ENCODE measurements at regions of chr2 and their contacts with region 1.

Region 1: GRCh38 chr2:84925724-84926376 is 20.4 kb downstream of the TMSB10 start:
- DNase-seq: peak; percentile 99
- H3K4me3 Mint-ChIP-seq: peak overlapping the region; percentile 82
- H3K27ac Mint-ChIP-seq: peak overlapping the region; percentile 78
- H3K4me1 Mint-ChIP-seq: peaks cover 43% of the 10 kb centered on the region
- H3K27me3 Mint-ChIP-seq: no peaks in the 10 kb centered on the region

Region 2: GRCh38 chr2:84781942-84782716 is 143.7 kb before region 1 on chr2:
- CTCF ChIA-PET with region 1: interaction called, 18 read pairs
- POLR2A ChIA-PET with region 1: interaction called, 14 read pairs
- DNase-seq: peak; percentile 75
- H3K4me3 Mint-ChIP-seq: no peak overlapping the region
- H3K27ac Mint-ChIP-seq: peak overlapping the region; percentile 97
- H3K4me1 Mint-ChIP-seq: peaks cover 67% of the 10 kb centered on the region
- H3K27me3 Mint-ChIP-seq: no peaks in the 10 kb centered on the region

Region 3: GRCh38 chr2:84839851-84840250 is 86.0 kb before region 1 on chr2:
- CTCF ChIA-PET with region 1: no interaction called
- POLR2A ChIA-PET with region 1: no interaction called
- DNase-seq: no peak
- H3K4me3 Mint-ChIP-seq: peak overlapping the region; percentile 43
- H3K27ac Mint-ChIP-seq: peak overlapping the region; percentile 37
- H3K4me1 Mint-ChIP-seq: peaks cover 50% of the 10 kb centered on the region
- H3K27me3 Mint-ChIP-seq: no peaks in the 10 kb centered on the region

Region 4: DNA sequence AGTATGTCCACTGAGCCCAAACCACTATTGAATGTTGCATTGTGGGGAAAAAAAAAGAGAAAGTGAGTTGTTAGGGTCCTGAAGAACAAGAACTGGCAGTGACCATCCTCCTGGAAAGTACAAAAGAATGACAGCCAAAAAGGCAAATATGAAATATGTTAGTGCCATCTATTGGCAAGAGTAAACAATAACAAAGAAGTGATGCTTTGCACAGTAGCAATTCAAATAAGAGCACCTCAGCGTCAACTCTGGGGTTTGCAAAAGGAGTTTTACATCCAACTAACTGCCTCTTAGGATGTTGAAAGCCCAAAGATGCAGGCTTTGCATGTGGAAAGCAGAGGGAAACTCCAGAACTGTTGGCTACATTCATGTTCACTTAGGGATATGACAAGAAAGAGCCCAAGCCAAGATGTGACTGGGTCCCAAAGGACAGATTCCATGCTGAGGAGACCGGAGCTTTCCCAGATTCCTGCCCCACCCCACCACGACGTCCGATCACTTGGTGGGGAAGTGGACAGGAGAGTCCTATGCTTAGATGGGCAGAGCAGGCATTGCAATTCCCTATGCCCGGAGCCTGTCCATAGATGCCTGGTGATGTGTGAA is 60.6 kb before region 1 on chr2:
- CTCF ChIA-PET with region 1: interaction called, 21 read pairs
- POLR2A ChIA-PET with region 1: interaction called, 7 read pairs
- DNase-seq: no peak
- H3K4me3 Mint-ChIP-seq: no peak overlapping the region
- H3K27ac Mint-ChIP-seq: no peak overlapping the region
- H3K4me1 Mint-ChIP-seq: peaks cover 43% of the 10 kb centered on the region
- H3K27me3 Mint-ChIP-seq: no peaks in the 10 kb centered on the region

Region 5: DNA sequence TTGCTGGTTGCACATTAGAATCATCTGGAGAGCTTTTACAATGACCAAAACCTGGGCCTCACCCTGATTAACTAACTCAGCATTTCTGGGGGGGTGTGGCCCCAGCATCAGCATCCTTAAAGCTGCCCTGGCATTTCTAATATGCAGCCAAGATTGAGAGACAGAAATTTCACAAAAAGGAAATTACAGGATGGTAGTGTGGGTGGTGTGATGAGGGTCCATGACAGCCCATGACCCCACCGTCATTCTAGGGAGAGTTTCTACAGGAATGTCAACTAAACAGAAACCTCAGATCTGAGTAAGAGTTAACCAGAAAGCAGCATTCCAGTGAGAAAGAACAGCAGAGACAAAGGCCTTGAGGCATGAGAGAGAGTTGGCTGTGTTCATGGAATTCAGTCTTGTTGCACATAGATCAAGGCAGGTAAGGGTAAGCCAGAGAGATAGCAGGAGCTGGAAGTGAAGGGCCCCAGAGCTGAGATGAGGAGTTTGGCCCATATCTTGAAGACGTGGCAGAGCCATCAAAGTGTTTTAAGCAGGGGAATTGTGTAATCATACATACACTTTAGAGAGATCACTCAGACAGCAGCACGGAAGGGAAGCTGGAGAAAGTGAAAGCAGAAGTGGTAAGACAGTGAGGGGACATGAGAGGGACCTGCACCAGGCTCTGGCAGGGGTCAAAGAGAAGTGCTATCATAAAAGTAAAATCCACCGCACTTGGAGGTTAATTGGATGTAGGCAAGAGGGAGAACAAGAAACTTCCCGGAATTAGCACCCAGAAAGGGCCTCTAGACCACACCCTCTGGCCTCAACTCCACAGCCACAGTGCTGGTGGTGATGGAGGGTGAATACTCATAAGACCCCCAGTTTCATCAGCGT is 37.2 kb before region 1 on chr2:
- CTCF ChIA-PET with region 1: interaction called, 98 read pairs
- POLR2A ChIA-PET with region 1: interaction called, 33 read pairs
- DNase-seq: peak; percentile 59
- H3K4me3 Mint-ChIP-seq: peak overlapping the region; percentile 74
- H3K27ac Mint-ChIP-seq: peak overlapping the region; percentile 94
- H3K4me1 Mint-ChIP-seq: peaks cover 42% of the 10 kb centered on the region
- H3K27me3 Mint-ChIP-seq: no peaks in the 10 kb centered on the region

Region 6: GRCh38 chr2:84912984-84913383 is 12.9 kb before region 1 on chr2:
- CTCF ChIA-PET with region 1: interaction called, 105 read pairs
- POLR2A ChIA-PET with region 1: interaction called, 210 read pairs
- DNase-seq: no peak
- H3K4me3 Mint-ChIP-seq: no peak overlapping the region
- H3K27ac Mint-ChIP-seq: no peak overlapping the region
- H3K4me1 Mint-ChIP-seq: peaks cover 32% of the 10 kb centered on the region
- H3K27me3 Mint-ChIP-seq: no peaks in the 10 kb centered on the region

Region 7: DNA sequence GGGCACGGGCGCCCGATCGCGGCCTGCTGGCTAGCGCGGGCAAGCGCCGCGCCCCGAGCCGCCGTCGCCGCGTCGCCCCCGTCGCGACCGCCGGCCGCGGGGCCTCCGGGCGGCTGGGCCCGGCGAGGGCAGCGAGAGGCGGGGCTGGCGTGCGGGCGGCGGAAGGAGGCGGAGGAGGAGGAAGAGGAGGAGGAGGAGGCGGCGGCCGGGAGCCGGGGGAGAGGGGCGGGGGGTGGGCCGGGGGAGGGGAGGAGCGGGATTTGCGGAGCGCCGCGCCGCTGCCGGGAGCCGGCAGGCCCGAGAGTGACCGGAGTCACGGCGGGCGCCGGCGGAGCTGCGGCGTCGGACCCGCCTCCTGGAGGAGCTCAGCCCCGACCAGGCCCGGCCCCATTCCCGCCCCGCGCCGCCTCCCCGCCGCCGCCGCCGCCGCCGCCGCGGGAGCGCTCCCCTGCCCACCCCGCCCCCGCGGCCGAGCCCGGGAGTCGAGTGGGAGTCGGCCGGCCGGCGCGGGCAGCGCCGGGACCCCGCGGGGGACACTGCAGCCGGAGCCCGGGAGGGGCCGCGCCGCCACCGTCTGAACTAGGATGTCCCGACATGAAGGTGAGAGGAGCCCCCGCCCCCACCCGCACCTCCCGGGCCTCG is 45.1 kb after region 1 on chr2 and contains the start of gene KCMF1:
- CTCF ChIA-PET with region 1: interaction called, 41 read pairs
- POLR2A ChIA-PET with region 1: interaction called, 71 read pairs
- DNase-seq: peak; percentile 76
- H3K4me3 Mint-ChIP-seq: peak within 1 kb of the TSS; percentile 96
- H3K27ac Mint-ChIP-seq: peak within 1 kb of the TSS; percentile 100
- H3K4me1 Mint-ChIP-seq: peaks cover 47% of the 10 kb centered on the region
- H3K27me3 Mint-ChIP-seq: no peaks in the 10 kb centered on the region
- total RNA-seq, gene KCMF1: 87.0 to 92.9 TPM

Region 8: DNA sequence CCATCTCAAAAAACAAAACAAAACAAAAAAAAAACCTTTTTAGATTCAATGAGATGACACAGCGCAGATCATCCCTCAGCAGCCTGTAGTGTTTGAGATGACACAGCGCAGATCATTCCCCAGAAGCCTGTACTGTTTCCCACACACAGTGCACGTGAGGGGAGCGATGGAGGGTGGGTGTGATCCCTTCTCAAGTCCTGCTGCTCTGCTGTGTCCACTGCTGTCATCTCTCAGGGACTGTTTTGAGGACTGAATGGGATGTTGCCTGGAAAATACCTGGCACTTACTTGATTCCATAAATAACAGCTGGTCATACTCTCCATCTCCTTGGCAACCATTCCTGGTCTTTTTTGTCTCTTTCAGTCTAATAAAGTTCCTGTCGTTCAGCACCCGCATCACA is 376.3 kb after region 1 on chr2:
- CTCF ChIA-PET with region 1: interaction called, 11 read pairs
- POLR2A ChIA-PET with region 1: no interaction called
- DNase-seq: no peak
- H3K4me3 Mint-ChIP-seq: no peak overlapping the region
- H3K27ac Mint-ChIP-seq: no peak overlapping the region
- H3K4me1 Mint-ChIP-seq: peaks cover 5% of the 10 kb centered on the region
- H3K27me3 Mint-ChIP-seq: peaks cover 12% of the 10 kb centered on the region

Measured in activated CD4-positive, alpha-beta memory T cell treated with anti-CD3 and anti-CD28 coated beads, Interleukin-2, amount 10 ng/mL, durations not matched to agents 7 days and 5 days (primary cell).